Transverse colon (tissue), 4 donors: ENCODE measurements at regions of chr4 and their contacts with region 1.

Region 1: DNA sequence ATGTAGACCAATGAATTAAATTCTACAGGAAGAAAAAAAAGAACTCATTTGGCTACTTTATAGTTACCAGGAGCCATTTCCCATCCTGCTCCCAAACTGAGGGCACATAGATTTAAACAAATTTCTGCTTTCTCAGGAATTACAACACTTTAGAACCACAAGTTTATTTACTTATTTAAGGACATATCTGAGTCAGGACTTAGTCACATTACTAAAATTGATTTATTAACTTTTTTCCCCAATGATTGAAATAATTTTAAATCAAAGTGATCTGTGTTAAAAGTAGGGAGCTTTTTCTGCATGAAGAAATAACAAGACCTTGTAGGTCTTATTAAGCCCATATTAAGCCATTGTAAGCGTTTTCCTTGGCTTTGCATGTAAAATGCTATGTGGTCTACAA is 291.0 kb upstream of the HAND2 start:
- DNase-seq: no peak
- H3K4me3 ChIP-seq: no peak overlapping the region
- H3K27ac ChIP-seq: no peak overlapping the region
- H3K4me1 ChIP-seq: no peaks in the 10 kb centered on the region
- H3K27me3 ChIP-seq: no peaks in the 10 kb centered on the region
- CTCF ChIP-seq: no peak
- EP300 ChIP-seq: no peak
- POLR2A ChIP-seq: no peak

Region 2: GRCh38 chr4:173748353-173748752 is 72.7 kb before region 1 on chr4:
- in situ Hi-C with region 1: no loop called
- intact Hi-C with region 1: no loop called
- DNase-seq: no peak
- H3K4me3 ChIP-seq: no peak overlapping the region
- H3K27ac ChIP-seq: no peak overlapping the region
- H3K4me1 ChIP-seq: no peaks in the 10 kb centered on the region
- H3K27me3 ChIP-seq: no peaks in the 10 kb centered on the region
- CTCF ChIP-seq: peak in 1 of 5 experiments; percentile 14
- EP300 ChIP-seq: no peak
- POLR2A ChIP-seq: no peak

Region 3: DNA sequence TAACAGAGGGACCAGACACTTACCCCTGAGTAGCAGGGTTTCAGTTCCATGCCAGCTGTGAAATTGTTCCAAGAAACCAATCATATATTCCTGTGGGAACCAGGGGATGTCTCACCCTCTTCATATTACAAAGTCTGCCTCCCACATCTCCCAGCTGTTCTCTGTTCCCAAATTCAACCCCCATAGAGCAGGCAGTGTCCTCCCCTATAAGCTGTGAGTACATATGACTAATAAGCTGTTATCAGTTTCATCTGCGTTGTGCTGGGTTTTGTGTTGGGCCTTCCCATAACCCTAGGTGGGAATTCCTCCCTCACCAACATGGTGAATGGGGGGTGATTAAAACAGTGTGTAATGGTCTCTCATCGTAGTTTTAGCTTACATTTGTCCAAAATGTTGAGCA is 503.7 kb after region 1 on chr4:
- in situ Hi-C with region 1: no loop called
- intact Hi-C with region 1: loop called (anchors 5 kb)
- DNase-seq: no peak
- H3K4me3 ChIP-seq: no peak overlapping the region
- H3K27ac ChIP-seq: no peak overlapping the region
- H3K4me1 ChIP-seq: no peaks in the 10 kb centered on the region
- H3K27me3 ChIP-seq: no peaks in the 10 kb centered on the region
- CTCF ChIP-seq: no peak
- EP300 ChIP-seq: no peak
- POLR2A ChIP-seq: no peak